Activated CD4-positive, alpha-beta memory T cell treated with anti-CD3 and anti-CD28 coated beads, Interleukin-2, amount 10 ng/mL, durations not matched to agents 7 days and 5 days (primary cell): ENCODE measurements at regions of chr19 and their contacts with region 1.

Region 1: DNA sequence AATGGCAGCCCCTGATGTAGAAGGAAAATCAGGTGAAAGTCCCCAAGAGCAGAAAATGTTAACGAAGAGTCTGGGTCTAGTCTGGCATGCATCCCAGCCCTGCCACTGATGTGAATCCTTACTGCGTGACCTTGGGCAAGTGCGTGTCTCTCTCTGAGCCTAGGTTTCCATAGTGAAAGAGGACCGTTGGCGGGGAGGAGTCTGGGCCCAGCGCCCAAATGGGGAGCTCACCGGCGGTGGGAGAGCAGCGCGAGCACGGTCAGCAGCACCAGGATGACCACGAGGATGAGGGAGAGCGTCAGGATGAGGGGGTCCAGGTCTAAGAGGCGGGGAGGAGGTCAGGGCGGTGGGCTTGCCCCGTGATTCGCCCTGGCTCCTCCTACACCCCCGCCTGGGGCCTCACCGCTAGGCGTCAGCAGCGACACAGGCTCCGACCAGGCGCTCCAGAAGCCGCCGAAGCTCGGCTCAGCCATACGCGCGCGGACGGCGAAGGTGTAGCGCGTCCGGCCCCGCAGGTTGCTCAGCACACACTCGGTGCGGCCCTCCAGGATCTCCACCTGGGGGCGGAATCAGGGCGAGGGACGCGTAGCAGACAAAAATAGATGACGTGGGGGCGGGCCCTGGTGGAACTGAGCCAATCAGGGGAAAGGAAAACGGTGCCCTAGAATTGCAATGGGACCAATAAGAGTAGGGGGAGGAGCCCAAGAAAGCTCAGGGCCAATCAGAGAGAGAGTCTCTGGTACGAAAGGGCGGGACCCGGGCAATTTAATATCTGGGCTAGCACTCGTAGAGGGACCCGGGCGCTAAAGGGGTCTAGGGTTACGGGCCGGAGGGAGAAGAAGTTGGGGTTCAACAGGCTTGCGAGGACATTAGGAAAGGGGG is 3.2 kb downstream of the EPOR start:
- DNase-seq: peak; percentile 98
- H3K4me3 Mint-ChIP-seq: peak overlapping the region; percentile 84
- H3K27ac Mint-ChIP-seq: peak overlapping the region; percentile 99
- H3K4me1 Mint-ChIP-seq: peaks cover 48% of the 10 kb centered on the region
- H3K27me3 Mint-ChIP-seq: peaks cover 16% of the 10 kb centered on the region

Region 2: GRCh38 chr19:11261941-11262839 is 118.7 kb before region 1 on chr19 and contains the start of gene DOCK6:
- CTCF ChIA-PET with region 1: no interaction called
- POLR2A ChIA-PET with region 1: no interaction called
- DNase-seq: no peak
- H3K4me3 Mint-ChIP-seq: peak within 1 kb of the TSS; percentile 43
- H3K27ac Mint-ChIP-seq: no peak within 1 kb of the TSS
- H3K4me1 Mint-ChIP-seq: peaks cover 4% of the 10 kb centered on the region
- H3K27me3 Mint-ChIP-seq: peaks cover 61% of the 10 kb centered on the region
- total RNA-seq, gene DOCK6: 0.35 to 0.68 TPM

Region 3: GRCh38 chr19:11346092-11346940 is 34.6 kb before region 1 on chr19 and contains the starts of genes CCDC159 and TMEM205:
- CTCF ChIA-PET with region 1: interaction called, 16 read pairs
- POLR2A ChIA-PET with region 1: interaction called, 16 read pairs
- DNase-seq: peak; percentile 99
- H3K4me3 Mint-ChIP-seq: peak within 1 kb of the TSS; percentile 93
- H3K27ac Mint-ChIP-seq: peak within 1 kb of the TSS; percentile 88
- H3K4me1 Mint-ChIP-seq: peaks cover 22% of the 10 kb centered on the region
- H3K27me3 Mint-ChIP-seq: no peaks in the 10 kb centered on the region
- total RNA-seq, gene CCDC159: 24.0 to 24.7 TPM
- total RNA-seq, gene TMEM205: 32.6 to 35.1 TPM

Region 4: GRCh38 chr19:11390933-11391680 is 10.2 kb after region 1 on chr19:
- CTCF ChIA-PET with region 1: interaction called, 28 read pairs
- POLR2A ChIA-PET with region 1: no interaction called
- DNase-seq: no peak
- H3K4me3 Mint-ChIP-seq: no peak overlapping the region
- H3K27ac Mint-ChIP-seq: no peak overlapping the region
- H3K4me1 Mint-ChIP-seq: peaks cover 11% of the 10 kb centered on the region
- H3K27me3 Mint-ChIP-seq: peaks cover 8% of the 10 kb centered on the region

Region 5: DNA sequence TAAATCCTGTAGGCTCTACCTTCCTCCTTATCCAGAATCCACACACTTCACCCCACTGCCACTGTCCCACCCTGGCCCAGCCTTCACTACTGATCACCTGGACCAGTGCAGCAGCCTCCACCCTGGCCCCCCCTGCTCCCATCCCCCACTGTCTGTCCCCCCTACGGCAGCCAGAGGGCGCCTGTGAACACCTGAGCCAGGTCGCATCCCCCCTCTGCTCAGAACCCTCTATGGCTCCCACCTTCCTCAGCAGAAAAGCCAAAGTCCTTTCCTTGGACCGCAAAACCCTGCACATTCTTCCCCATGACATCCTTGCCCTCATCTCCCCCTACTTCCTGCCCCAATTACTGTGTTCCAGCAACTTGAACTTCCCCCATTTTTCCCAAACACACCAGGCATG is 79.3 kb after region 1 on chr19:
- CTCF ChIA-PET with region 1: no interaction called
- POLR2A ChIA-PET with region 1: no interaction called
- DNase-seq: peak; percentile 24
- H3K4me3 Mint-ChIP-seq: no peak overlapping the region
- H3K27ac Mint-ChIP-seq: no peak overlapping the region
- H3K4me1 Mint-ChIP-seq: no peaks in the 10 kb centered on the region
- H3K27me3 Mint-ChIP-seq: peaks cover 4% of the 10 kb centered on the region

Region 6: GRCh38 chr19:11482384-11483050 is 101.6 kb after region 1 on chr19:
- CTCF ChIA-PET with region 1: interaction called, 45 read pairs
- POLR2A ChIA-PET with region 1: interaction called, 25 read pairs
- DNase-seq: peak; percentile 90
- H3K4me3 Mint-ChIP-seq: peak overlapping the region; percentile 64
- H3K27ac Mint-ChIP-seq: peak overlapping the region; percentile 47
- H3K4me1 Mint-ChIP-seq: peaks cover 30% of the 10 kb centered on the region
- H3K27me3 Mint-ChIP-seq: peaks cover 29% of the 10 kb centered on the region